ENCODE measurements at regions of chr19 and their contacts with region 1.

Region 1: DNA sequence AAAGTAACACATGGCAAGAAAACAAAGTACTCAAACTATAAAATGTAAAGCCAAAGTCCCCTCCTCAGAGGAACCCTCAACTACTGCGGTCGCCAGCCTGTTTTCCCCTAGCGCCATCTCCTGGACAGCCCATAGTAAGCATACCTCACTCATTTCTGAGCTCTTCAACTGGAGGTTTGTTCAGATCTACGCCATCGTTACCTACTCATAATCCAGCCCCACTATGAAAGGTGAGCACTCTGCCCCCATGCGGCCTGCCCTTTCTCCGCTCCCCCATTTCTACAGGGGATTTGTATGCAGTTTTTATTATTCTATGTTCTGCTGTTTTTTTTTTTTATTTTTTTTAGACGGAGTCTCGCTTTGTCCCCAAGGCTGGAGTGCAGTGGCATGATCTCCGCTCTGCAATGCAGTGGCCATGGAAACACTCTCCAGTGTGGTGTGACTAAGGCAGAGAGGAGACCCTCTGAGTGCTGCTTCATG is 26.2 kb downstream of the OPA3 start:
- DNase-seq: peak; percentile 75
- H3K4me3 Mint-ChIP-seq: no peak overlapping the region
- H3K27ac Mint-ChIP-seq: no peak overlapping the region
- H3K4me1 Mint-ChIP-seq: peaks cover 13% of the 10 kb centered on the region
- H3K27me3 Mint-ChIP-seq: no peaks in the 10 kb centered on the region

Region 2: GRCh38 chr19:45515081-45515624 is 43.3 kb before region 1 on chr19:
- CTCF ChIA-PET with region 1: interaction called, 13 read pairs
- POLR2A ChIA-PET with region 1: no interaction called
- DNase-seq: peak; percentile 31
- H3K4me3 Mint-ChIP-seq: peak overlapping the region; percentile 47
- H3K27ac Mint-ChIP-seq: peak overlapping the region; percentile 93
- H3K4me1 Mint-ChIP-seq: peaks cover 71% of the 10 kb centered on the region
- H3K27me3 Mint-ChIP-seq: no peaks in the 10 kb centered on the region

Region 3: GRCh38 chr19:45542234-45542668 is 16.2 kb before region 1 on chr19:
- CTCF ChIA-PET with region 1: interaction called, 10 read pairs
- POLR2A ChIA-PET with region 1: no interaction called
- DNase-seq: no peak
- H3K4me3 Mint-ChIP-seq: no peak overlapping the region
- H3K27ac Mint-ChIP-seq: no peak overlapping the region
- H3K4me1 Mint-ChIP-seq: peaks cover 7% of the 10 kb centered on the region
- H3K27me3 Mint-ChIP-seq: no peaks in the 10 kb centered on the region

Region 4: DNA sequence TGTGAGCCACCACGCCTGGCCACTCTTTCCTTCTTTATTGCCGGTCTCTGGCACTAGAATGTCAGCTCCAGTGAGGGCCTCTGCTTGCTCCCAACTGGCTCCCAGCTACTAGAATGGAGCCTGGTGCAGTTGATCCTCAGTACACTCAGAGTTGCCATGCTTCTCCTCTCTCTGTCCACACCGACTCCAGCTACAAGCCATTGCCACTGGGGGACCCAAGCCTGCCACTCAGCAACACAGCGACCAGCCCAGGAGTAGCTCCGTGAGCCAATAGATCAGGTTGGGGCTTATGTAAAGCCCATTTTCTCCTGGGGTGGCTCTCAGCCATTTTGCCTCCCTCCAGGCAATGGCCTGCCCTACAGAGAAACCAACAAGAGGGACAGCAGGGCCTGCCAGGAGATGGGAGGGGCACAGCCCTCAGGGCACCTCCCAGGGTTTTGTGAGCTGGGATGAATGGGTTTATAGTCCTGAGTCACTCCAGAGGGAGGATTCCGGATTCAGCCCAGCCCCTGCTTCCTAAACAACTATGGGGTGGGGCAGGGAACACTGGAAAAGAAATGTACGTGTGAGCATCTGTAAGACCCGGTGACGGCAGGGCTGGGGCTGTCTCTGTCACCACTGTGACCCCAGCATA is 10.3 kb before region 1 on chr19:
- CTCF ChIA-PET with region 1: interaction called, 10 read pairs
- POLR2A ChIA-PET with region 1: no interaction called
- DNase-seq: no peak
- H3K4me3 Mint-ChIP-seq: no peak overlapping the region
- H3K27ac Mint-ChIP-seq: no peak overlapping the region
- H3K4me1 Mint-ChIP-seq: peaks cover 7% of the 10 kb centered on the region
- H3K27me3 Mint-ChIP-seq: no peaks in the 10 kb centered on the region

Region 5: GRCh38 chr19:45607071-45608029 is 48.9 kb after region 1 on chr19:
- CTCF ChIA-PET with region 1: no interaction called
- POLR2A ChIA-PET with region 1: no interaction called
- DNase-seq: peak; percentile 47
- H3K4me3 Mint-ChIP-seq: no peak overlapping the region
- H3K27ac Mint-ChIP-seq: peak overlapping the region; percentile 69
- H3K4me1 Mint-ChIP-seq: peaks cover 18% of the 10 kb centered on the region
- H3K27me3 Mint-ChIP-seq: peaks cover 10% of the 10 kb centered on the region